CD14-positive monocyte (primary cell): ENCODE measurements at regions of chr4 and their contacts with region 1.

Region 1: DNA sequence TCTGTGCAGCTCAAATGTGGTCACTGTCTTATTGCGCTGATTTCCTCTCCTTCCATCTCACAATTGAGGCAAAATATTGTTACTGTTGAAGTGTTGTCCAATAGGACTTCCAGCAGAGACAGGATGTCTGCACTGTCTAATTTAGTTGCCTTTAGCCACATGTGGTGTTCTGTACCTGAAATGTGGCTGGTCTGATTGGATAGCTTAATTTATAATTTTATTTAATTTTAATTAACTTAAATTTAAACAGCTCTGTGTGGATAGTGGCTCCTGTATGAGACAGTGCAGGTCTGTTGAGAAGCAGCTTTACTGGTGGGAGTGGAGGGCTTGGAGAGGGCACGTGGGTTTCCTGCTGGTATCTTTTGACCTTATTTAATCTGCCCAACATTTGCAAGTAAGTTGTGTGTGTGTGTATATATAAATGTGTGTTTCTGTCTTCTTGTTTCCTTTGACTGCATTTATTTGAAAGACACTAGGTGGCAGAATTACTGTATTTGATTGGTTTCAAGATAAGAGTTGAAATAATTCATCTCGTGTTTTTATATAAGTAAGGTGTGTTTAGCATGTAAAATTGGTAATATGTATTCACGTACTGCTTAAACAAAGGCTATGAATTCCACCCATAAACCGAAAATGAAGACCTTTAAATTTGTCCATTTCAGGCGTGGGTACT is 55.3 kb upstream of the MSANTD1 start:
- DNase-seq: peak in 1 of 3 donors; percentile 7
- H3K4me3 ChIP-seq: no peak overlapping the region
- H3K4me3 Mint-ChIP-seq: no peak overlapping the region
- H3K27ac ChIP-seq: no peak overlapping the region
- H3K27ac Mint-ChIP-seq: peak overlapping the region in 1 of 7 donors; percentile 81
- H3K4me1 ChIP-seq: no peaks in the 10 kb centered on the region
- H3K4me1 Mint-ChIP-seq: no peaks in the 10 kb centered on the region
- H3K27me3 ChIP-seq: no peaks in the 10 kb centered on the region
- H3K27me3 Mint-ChIP-seq: peaks cover 0 to 5% (median 0%) of the 10 kb centered on the region in 3 donors
- CTCF ChIP-seq: peak; percentile 46

Region 2: GRCh38 chr4:3226467-3226866 is 32.8 kb after region 1 on chr4:
- intact Hi-C with region 1: loop called (anchors 5 kb)
- DNase-seq: peak; percentile 81 to 92 (median 86)
- H3K4me3 ChIP-seq: peak overlapping the region in 2 of 3 experiments; percentile 24 to 66
- H3K4me3 Mint-ChIP-seq: peak overlapping the region; percentile 65 to 78
- H3K27ac ChIP-seq: peak overlapping the region; percentile 99 to 100
- H3K27ac Mint-ChIP-seq: peak overlapping the region; percentile 98 to 99 (median 99)
- H3K4me1 ChIP-seq: peaks cover 50 to 52% of the 10 kb centered on the region in 2 donors
- H3K4me1 Mint-ChIP-seq: peaks cover 47% of the 10 kb centered on the region
- H3K27me3 ChIP-seq: no peaks in the 10 kb centered on the region
- H3K27me3 Mint-ChIP-seq: peaks cover 0 to 4% (median 2%) of the 10 kb centered on the region in 3 donors
- CTCF ChIP-seq: no peak

Region 3: DNA sequence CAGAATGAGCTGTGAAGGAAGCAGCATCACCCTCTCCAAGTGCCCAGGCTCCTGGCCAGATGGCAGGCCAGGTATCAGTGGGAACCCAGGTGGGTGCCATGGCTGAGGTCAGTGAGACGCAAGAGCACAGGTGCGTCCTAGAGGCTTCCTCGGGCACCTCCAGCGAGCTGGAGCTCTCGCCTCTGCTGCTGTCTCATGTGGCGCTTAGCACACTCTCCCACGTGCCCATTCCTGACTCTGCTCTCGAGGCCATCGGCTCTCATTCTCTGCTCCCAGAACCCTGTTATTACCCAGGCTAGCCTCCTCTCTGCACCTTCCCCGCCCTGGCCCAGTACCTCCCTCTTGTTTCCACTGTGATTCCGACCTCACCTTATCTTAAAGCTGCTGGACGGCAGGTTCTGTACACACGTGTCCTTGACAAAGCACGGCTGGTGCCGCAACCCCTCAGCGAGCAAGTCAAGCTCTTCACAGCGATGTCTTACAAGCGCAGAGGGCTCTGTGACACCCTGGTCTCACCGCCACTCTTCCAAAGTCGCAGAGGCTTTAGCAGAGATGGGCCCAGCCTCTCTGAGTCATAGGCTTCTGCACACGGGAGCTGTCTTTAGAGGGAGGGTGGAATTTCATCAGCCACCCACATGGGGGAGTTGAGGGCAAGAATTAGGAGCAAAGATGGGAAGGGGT is 39.9 kb after region 1 on chr4:
- intact Hi-C with region 1: loop called (anchors 5 kb)
- DNase-seq: no peak
- H3K4me3 ChIP-seq: no peak overlapping the region
- H3K4me3 Mint-ChIP-seq: no peak overlapping the region
- H3K27ac ChIP-seq: peak overlapping the region in 1 of 2 donors; percentile 14
- H3K27ac Mint-ChIP-seq: peak overlapping the region in 4 of 7 donors; percentile 25 to 60 (median 40)
- H3K4me1 ChIP-seq: no peaks in the 10 kb centered on the region
- H3K4me1 Mint-ChIP-seq: no peaks in the 10 kb centered on the region
- H3K27me3 ChIP-seq: no peaks in the 10 kb centered on the region
- H3K27me3 Mint-ChIP-seq: peaks cover 0 to 2% (median 0%) of the 10 kb centered on the region in 3 donors
- CTCF ChIP-seq: no peak

Region 4: DNA sequence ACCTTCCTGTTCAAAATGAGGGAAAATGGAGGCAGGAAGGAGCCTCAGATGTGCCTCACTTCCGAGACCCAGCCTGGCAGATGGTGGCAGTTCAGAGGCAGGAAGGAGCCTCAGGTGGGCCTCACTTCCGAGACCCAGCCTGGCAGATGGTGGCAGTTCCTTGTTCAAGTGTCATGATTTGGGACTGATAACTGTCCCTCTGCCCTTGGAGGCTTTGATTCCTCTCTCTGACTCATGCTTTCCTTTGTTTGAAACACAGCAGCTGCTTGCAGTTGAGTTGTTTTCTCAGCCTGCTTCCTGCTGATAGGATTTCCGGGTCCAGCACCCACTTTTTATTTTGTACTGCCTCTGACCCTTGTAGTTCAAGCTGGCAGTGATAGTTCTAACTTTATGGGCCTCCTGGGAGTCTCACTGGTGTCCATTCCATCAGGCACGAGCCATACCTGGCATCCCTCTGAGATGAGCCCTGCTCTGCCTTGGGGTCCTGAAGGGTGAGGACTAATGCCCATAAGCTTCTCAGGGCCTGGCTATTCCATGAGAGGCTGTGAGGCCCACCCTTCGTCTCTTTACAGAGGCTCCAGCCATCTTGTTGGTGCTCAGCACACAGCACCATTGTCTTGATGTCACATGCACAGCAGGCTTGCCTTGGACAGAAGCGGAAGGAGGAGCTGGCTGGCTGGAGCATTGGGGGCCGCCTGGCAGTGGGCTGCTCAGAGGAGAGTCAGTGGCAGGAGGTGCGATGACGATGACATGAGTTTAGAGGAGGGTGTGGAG is 112.1 kb after region 1 on chr4:
- intact Hi-C with region 1: loop called in 1 of 2 experiments (anchors 10 kb)
- DNase-seq: peak in 2 of 3 donors; percentile 38 to 44
- H3K4me3 ChIP-seq: no peak overlapping the region
- H3K4me3 Mint-ChIP-seq: no peak overlapping the region
- H3K27ac ChIP-seq: no peak overlapping the region
- H3K27ac Mint-ChIP-seq: peak overlapping the region in 4 of 7 donors; percentile 22 to 81 (median 40)
- H3K4me1 ChIP-seq: peaks cover 34 to 41% of the 10 kb centered on the region in 2 donors
- H3K4me1 Mint-ChIP-seq: peaks cover 48% of the 10 kb centered on the region
- H3K27me3 ChIP-seq: peaks cover 0 to 9% of the 10 kb centered on the region in 2 donors
- H3K27me3 Mint-ChIP-seq: peaks cover 6 to 25% (median 20%) of the 10 kb centered on the region in 3 donors
- CTCF ChIP-seq: no peak

Region 5: GRCh38 chr4:3442959-3443749 is 249.5 kb after region 1 on chr4:
- intact Hi-C with region 1: loop called (anchors 5 to 10 kb)
- DNase-seq: peak; percentile 49 to 65 (median 58)
- H3K4me3 ChIP-seq: no peak overlapping the region
- H3K4me3 Mint-ChIP-seq: no peak overlapping the region
- H3K27ac ChIP-seq: no peak overlapping the region
- H3K27ac Mint-ChIP-seq: no peak overlapping the region
- H3K4me1 ChIP-seq: peaks cover 5 to 6% of the 10 kb centered on the region in 2 donors
- H3K4me1 Mint-ChIP-seq: peaks cover 10% of the 10 kb centered on the region
- H3K27me3 ChIP-seq: no peaks in the 10 kb centered on the region
- H3K27me3 Mint-ChIP-seq: peaks cover 0 to 3% (median 1%) of the 10 kb centered on the region in 3 donors
- CTCF ChIP-seq: peak; percentile 100